Activated B cell treated with CpG ODN at 0.5 μM for 24 hours (primary cell): ENCODE measurements at regions of chr17 and their contacts with region 1.

Region 1: GRCh38 chr17:4980644-4981216 is 6.7 kb downstream of the CAMTA2 start:
- DNase-seq: no peak
- ATAC-seq: peak; percentile 68
- H3K4me3 Mint-ChIP-seq: peak overlapping the region; percentile 2
- H3K27ac Mint-ChIP-seq: peak overlapping the region; percentile 37
- H3K4me1 Mint-ChIP-seq: peaks cover 41% of the 10 kb centered on the region
- H3K27me3 Mint-ChIP-seq: no peaks in the 10 kb centered on the region
- CTCF ChIP-seq: peak; percentile 55

Region 2: DNA sequence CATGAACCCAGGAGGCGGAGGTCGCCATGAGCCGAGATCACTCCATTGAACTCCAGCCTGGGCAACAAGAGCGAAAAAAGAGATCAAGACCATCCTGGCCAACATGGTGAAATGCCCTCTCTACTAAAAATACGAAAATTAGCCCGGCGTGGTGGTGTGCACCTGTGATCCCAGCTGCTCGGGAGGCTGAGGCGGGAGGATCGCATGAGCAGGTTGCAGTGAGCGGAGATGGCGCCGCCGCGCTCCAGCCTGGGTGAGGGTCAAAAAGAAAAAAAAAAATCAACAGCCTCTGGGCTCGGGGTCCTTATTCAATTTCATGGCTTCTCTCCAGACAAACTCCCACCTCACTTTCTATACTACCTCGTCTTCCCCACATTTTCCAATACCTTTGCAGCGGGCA is 51.8 kb before region 1 on chr17:
- CTCF ChIA-PET with region 1: no interaction called
- POLR2A ChIA-PET with region 1: no interaction called
- intact Hi-C with region 1: no loop called
- DNase-seq: no peak
- ATAC-seq: no peak
- H3K4me3 Mint-ChIP-seq: no peak overlapping the region
- H3K27ac Mint-ChIP-seq: no peak overlapping the region
- H3K4me1 Mint-ChIP-seq: peaks cover 22% of the 10 kb centered on the region
- H3K27me3 Mint-ChIP-seq: peaks cover 10% of the 10 kb centered on the region
- CTCF ChIP-seq: no peak

Region 3: GRCh38 chr17:4997302-4998026 is 16.7 kb after region 1 on chr17 and contains the starts of genes INCA1 and KIF1C:
- CTCF ChIA-PET with region 1: interaction called, 3 read pairs
- POLR2A ChIA-PET with region 1: interaction called, 7 read pairs
- intact Hi-C with region 1: loop called (anchors 2 kb)
- DNase-seq: peak; percentile 95
- ATAC-seq: peak; percentile 95
- H3K4me3 Mint-ChIP-seq: peak within 1 kb of the TSS; percentile 85
- H3K27ac Mint-ChIP-seq: peak within 1 kb of the TSS; percentile 90
- H3K4me1 Mint-ChIP-seq: peaks cover 20% of the 10 kb centered on the region
- H3K27me3 Mint-ChIP-seq: no peaks in the 10 kb centered on the region
- CTCF ChIP-seq: no peak
- total RNA-seq, gene INCA1: 0.17 and 0.44 TPM in 2 replicates
- total RNA-seq, gene KIF1C: 62.6 and 63.8 TPM in 2 replicates

Region 4: GRCh38 chr17:5055543-5055942 is 74.8 kb after region 1 on chr17:
- CTCF ChIA-PET with region 1: interaction called, 32 read pairs
- POLR2A ChIA-PET with region 1: no interaction called
- intact Hi-C with region 1: no loop called
- DNase-seq: no peak
- ATAC-seq: no peak
- H3K4me3 Mint-ChIP-seq: no peak overlapping the region
- H3K27ac Mint-ChIP-seq: no peak overlapping the region
- H3K4me1 Mint-ChIP-seq: peaks cover 19% of the 10 kb centered on the region
- H3K27me3 Mint-ChIP-seq: no peaks in the 10 kb centered on the region
- CTCF ChIP-seq: no peak

Region 5: GRCh38 chr17:5065227-5065744 is 84.6 kb after region 1 on chr17:
- CTCF ChIA-PET with region 1: interaction called, 32 read pairs
- POLR2A ChIA-PET with region 1: no interaction called
- intact Hi-C with region 1: loop called (anchors 1 kb)
- DNase-seq: no peak
- ATAC-seq: no peak
- H3K4me3 Mint-ChIP-seq: no peak overlapping the region
- H3K27ac Mint-ChIP-seq: no peak overlapping the region
- H3K4me1 Mint-ChIP-seq: peaks cover 6% of the 10 kb centered on the region
- H3K27me3 Mint-ChIP-seq: peaks cover 5% of the 10 kb centered on the region
- CTCF ChIP-seq: no peak